Esophagus muscularis mucosa (tissue), 4 donors: ENCODE measurements at regions of chr7 and their contacts with region 1.

Region 1: GRCh38 chr7:149459540-149460452 is 1.1 kb downstream of the ZNF777 start:
- DNase-seq: peak; percentile 78
- H3K4me3 ChIP-seq: peak overlapping the region; percentile 66 to 88 (median 80)
- H3K27ac ChIP-seq: peak overlapping the region; percentile 40 to 89 (median 80)
- H3K4me1 ChIP-seq: peaks cover 17 to 37% (median 28%) of the 10 kb centered on the region in 4 donors
- H3K27me3 ChIP-seq: no peaks in the 10 kb centered on the region
- CTCF ChIP-seq: no peak
- EP300 ChIP-seq: no peak
- POLR2A ChIP-seq: no peak

Region 2: DNA sequence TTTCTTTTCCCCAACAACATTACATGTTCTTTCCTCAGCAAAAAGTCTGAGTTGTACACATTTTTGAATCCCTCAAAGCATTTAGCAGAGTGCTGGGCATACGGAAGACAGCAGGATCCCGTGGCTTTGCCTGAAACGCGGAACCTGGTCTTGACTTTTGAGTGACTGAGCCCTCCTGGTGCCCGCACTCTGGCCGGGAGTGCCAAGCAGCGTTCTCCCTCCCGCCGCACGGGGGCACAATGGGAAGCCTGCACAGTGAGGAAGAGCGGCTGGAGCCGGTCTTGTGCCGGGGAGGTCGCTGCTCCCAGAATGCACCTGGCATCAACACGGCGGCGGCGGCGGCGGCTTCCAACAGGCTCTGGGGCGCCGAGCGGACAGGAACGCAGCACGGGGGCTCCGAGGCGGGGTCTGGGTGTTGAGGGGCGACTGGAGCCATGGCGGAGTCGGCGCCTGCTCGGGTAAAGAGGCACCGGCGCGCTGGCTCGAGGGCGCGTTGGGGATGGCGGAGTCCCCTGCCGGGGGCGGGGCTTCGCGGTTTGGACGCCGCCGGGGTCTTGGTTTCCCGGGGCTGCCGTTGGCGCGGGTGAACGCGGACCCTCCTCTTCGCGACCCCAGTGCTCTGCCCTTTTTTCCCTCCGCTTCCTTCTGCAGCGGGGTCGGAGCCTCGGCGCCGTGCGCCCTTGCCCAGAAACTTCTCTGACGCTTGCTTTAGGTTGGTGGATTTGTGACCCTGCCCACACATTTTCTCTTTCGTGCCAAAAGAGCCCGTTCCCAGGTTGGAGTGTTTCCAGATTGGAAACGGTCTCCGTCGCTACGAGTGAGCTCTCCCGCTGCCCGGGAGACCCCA is 220.2 kb before region 1 on chr7 and contains the start of gene ZNF212:
- intact Hi-C with region 1: loop called (anchors 10 kb)
- DNase-seq: peak; percentile 95
- H3K4me3 ChIP-seq: peak within 1 kb of the TSS; percentile 79 to 95 (median 86)
- H3K27ac ChIP-seq: peak within 1 kb of the TSS; percentile 73 to 82 (median 75)
- H3K4me1 ChIP-seq: peaks cover 15 to 32% (median 24%) of the 10 kb centered on the region in 4 donors
- H3K27me3 ChIP-seq: no peaks in the 10 kb centered on the region
- CTCF ChIP-seq: peak; percentile 83 to 96 (median 93)
- EP300 ChIP-seq: no peak
- POLR2A ChIP-seq: no peak
- total RNA-seq, gene ZNF212: 4.8 to 8.8 (median 7.4) TPM

Region 3: GRCh38 chr7:149692557-149692982 is 232.8 kb after region 1 on chr7:
- intact Hi-C with region 1: no loop called
- DNase-seq: no peak
- H3K4me3 ChIP-seq: peak overlapping the region; percentile 41 to 53 (median 44)
- H3K27ac ChIP-seq: no peak overlapping the region
- H3K4me1 ChIP-seq: peaks cover 0 to 25% (median 19%) of the 10 kb centered on the region in 4 donors
- H3K27me3 ChIP-seq: peaks cover 0 to 25% (median 8%) of the 10 kb centered on the region in 4 donors
- CTCF ChIP-seq: no peak
- EP300 ChIP-seq: no peak
- POLR2A ChIP-seq: no peak